Common myeloid progenitor, CD34-positive (primary cell): ENCODE measurements at regions of chr20 and their contacts with region 1.

Region 1: GRCh38 chr20:32574296-32575226 is 10.6 kb downstream of the NOL4L start:
- DNase-seq: peak; percentile 83 to 94 (median 94)
- H3K4me3 ChIP-seq: peak overlapping the region in 2 of 7 experiments; percentile 2 to 28
- H3K27ac ChIP-seq: peak overlapping the region in 1 of 2 experiments; percentile 56
- H3K4me1 ChIP-seq: peaks cover 0 to 92% (median 53%) of the 10 kb centered on the region in 4 experiments
- H3K27me3 ChIP-seq: no peaks in the 10 kb centered on the region

Region 2: DNA sequence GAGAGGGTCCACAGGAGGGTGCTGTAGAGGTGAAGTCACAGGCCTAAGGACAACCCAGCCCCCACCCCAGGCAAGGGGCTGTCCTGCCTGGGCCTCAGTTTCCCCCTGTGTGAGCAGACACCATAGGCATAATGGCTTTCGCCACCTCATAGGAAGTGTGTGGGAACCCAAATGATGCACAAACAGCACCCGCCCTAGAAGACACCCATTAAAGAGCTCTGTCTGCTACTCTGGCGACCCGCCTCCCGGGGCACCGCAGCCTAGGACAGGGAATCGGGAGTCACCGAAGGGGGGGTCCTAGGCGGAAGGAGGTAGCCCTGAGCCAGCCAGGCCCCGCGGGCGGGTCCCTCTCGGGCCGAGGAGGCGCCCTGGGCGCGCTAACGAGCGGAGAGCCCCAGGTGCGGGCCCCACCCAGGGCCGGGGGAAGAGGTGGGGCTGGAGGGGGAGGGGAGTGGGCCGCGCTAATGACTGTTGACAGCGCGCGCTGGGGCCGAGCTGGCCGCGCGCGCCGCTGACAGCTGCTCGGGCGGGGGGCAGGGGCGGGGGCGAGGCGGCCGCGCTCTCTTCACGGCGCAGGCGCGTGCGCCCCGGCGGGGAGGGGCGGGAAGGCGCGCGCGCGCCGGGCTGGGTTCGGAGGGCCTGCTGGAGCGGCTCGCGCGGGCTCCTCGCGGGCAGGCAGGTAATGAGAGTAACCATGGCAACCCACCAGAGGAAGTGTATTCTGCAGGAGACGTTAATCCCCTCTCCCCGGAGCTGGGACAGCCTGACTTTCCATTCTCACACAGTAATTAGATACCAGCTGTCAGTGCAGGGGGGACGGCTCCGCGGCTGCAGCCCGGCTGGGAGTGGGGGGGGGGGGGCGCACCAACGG is 38.4 kb before region 1 on chr20:
- CTCF ChIA-PET with region 1: interaction called, 14 read pairs
- POLR2A ChIA-PET with region 1: interaction called, 3 read pairs
- DNase-seq: peak in 2 of 3 donors; percentile 82 to 88
- H3K4me3 ChIP-seq: peak overlapping the region; percentile 27 to 73 (median 62)
- H3K27ac ChIP-seq: peak overlapping the region in 1 of 2 experiments; percentile 70
- H3K4me1 ChIP-seq: peaks cover 19 to 89% (median 79%) of the 10 kb centered on the region in 4 experiments
- H3K27me3 ChIP-seq: no peaks in the 10 kb centered on the region

Region 3: DNA sequence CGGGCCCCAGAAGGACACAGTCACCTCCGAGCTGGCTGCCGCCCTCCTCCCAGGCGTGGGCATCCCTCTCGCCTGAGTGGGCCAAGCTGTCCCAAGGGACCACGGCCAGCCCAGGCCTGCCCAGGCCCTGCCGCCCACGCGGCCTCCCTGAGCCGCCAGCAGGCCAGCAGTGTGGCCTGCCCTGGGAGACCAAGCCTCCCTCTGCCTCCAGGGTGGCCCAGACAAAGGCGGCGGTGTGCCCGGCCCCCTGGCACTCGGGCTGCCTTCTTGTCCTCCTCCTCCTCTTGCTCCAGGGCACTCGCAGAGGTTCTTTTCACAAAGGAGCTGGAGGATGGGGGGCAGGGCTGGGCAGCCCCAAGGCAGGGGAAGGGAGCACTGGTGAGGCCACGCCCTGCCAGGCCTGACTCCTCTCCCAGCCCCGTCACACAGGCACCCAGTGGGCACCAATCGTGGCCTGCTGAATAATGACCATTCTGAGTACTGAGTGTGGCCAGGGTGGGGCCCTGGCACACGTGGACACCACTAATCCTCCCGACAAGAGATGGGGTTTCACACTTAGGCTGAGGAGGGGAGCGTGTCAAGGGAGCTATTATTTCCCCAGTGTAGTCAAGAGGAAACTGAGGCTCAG is 14.7 kb before region 1 on chr20:
- CTCF ChIA-PET with region 1: interaction called, 24 read pairs
- POLR2A ChIA-PET with region 1: no interaction called
- DNase-seq: no peak
- H3K4me3 ChIP-seq: no peak overlapping the region
- H3K27ac ChIP-seq: no peak overlapping the region
- H3K4me1 ChIP-seq: peaks cover 0 to 54% (median 40%) of the 10 kb centered on the region in 4 experiments
- H3K27me3 ChIP-seq: no peaks in the 10 kb centered on the region

Region 4: GRCh38 chr20:32585011-32585518 is 10.5 kb after region 1 on chr20 and contains the start of gene NOL4L:
- CTCF ChIA-PET with region 1: interaction called, 17 read pairs
- POLR2A ChIA-PET with region 1: interaction called, 4 read pairs
- DNase-seq: peak in 1 of 3 donors; percentile 36
- H3K4me3 ChIP-seq: peak within 1 kb of the TSS; percentile 68 to 90 (median 84)
- H3K27ac ChIP-seq: no peak within 1 kb of the TSS
- H3K4me1 ChIP-seq: peaks cover 0 to 55% (median 43%) of the 10 kb centered on the region in 4 experiments
- H3K27me3 ChIP-seq: no peaks in the 10 kb centered on the region